GM10248 (cell line): ENCODE measurements at regions of chr15 and their contacts with region 1.

Region 1: DNA sequence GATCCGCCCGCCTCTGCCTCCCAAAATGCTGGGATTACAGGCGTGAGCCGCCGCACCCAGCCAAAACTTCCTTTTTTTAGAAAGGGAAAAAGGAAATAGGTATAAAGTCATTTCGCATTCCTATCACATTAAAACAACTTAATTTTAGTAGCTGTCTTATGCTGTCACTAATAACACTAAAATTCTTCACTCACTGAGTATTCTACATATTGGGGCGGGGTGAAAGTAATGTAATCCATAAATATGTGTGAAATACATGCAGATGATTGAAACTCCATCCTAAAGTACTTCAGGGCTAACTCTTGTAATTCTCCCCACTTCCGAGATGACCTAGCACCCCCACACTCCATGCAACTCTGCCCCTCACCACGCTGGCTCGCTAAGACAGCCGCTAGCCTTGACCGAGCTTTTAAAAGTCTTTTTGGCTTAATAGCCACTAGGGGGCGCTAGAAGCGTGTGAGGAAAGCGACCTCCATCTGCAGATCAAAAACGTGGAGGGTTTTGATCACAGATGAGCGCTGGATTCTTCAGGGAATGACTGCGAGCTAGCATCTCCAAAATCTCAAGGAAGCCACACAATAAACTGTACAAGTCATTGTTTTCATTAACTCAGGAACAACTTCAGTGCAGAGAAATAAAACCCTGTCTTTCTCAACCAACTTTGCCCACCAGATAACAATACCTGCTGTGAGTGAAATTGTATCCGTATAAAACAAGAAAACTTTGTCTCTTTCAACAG is 129.3 kb upstream of the IGF1R start:
- DNase-seq: peak; percentile 75
- CTCF ChIP-seq: peak; percentile 60

Region 2: DNA sequence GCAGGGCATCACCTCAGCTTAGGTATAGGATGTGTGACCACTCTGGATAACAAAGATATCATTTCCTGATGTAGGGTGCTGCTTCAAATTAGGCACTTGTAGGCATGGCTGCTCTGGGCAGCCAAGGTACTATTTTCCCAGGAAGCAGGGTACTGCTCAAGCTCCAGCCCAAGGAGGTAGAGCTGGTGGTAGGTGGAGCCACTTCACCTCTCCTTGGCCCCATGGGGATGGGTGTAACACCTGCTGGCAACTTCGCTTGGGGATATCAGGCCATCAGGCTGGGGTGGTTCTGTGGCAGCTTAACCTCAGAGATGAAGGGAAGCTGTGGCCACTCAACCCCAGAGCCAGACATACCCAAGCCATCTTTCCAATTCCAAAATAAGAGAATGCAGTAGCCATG is 17.8 kb before region 1 on chr15:
- CTCF ChIA-PET with region 1: interaction called, 11 read pairs
- POLR2A ChIA-PET with region 1: no interaction called
- DNase-seq: no peak
- CTCF ChIP-seq: no peak

Region 3: DNA sequence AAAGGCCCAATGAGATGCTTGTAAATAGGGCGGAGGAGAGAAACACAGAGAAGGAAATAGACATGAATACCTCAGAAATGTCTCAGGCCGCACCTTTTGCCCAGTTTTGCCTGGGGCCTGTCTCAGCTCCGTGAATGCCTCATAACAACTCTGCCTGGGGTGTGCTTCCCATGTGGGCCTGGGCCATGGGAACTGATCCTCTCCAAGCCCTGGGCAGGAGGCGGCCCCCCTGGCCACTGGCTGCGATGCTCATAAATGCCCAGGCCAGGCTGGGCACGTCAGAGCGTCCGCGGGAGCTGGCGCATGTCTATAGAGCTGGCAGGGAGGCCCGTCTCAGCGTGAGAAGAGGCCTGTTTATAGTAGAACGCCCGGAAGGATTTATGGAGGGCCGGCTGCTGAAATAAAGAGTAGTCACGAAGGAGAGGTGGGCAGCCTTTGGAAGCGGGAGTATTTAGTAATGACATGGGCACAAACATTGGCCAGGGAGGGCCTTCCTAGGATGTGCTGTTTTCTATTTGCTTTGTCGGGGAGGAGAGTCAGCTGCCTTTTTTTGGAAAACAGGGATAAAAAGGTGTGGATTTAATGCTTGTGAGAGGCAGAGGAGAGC is 43.4 kb after region 1 on chr15:
- CTCF ChIA-PET with region 1: interaction called, 11 read pairs
- POLR2A ChIA-PET with region 1: no interaction called
- DNase-seq: no peak
- CTCF ChIP-seq: no peak

Region 4: GRCh38 chr15:98658831-98659699 is 140.1 kb after region 1 on chr15:
- CTCF ChIA-PET with region 1: interaction called, 120 read pairs
- POLR2A ChIA-PET with region 1: no interaction called
- DNase-seq: peak; percentile 70
- CTCF ChIP-seq: peak; percentile 80